ENCODE measurements at regions of chr5 and their contacts with region 1.

Region 1: DNA sequence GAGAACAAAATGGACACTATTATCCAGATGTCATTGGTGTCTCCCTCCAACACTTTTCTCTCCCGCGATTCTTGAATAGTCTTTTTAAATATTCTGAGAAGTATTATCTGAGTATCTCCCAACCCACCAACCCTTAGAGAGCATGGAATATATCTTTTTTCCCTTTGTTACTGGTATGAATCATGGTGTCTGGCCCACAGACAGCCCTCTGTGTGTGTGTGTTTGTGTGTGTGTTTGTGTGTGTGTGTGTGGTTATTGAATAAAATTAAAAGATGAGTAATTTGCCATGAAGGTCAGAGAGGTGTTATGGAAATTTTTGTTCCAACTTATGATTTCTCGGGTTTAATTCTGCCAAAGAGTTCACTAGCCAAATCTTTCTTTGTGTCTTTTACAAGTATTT is 47.7 kb downstream of the CAMK4 start:
- DNase-seq: no peak
- ATAC-seq: no peak
- H3K4me3 ChIP-seq: no peak overlapping the region
- H3K4me3 Mint-ChIP-seq: no peak overlapping the region
- H3K27ac ChIP-seq: no peak overlapping the region
- H3K27ac Mint-ChIP-seq: peak overlapping the region; percentile 58
- H3K4me1 ChIP-seq: peaks cover 12% of the 10 kb centered on the region
- H3K4me1 Mint-ChIP-seq: peaks cover 78% of the 10 kb centered on the region
- H3K27me3 ChIP-seq: no peaks in the 10 kb centered on the region
- H3K27me3 Mint-ChIP-seq: no peaks in the 10 kb centered on the region
- CTCF ChIP-seq: no peak

Region 2: GRCh38 chr5:111254613-111255012 is 17.3 kb before region 1 on chr5:
- CTCF ChIA-PET with region 1: interaction called, 4 read pairs
- POLR2A ChIA-PET with region 1: interaction called, 3 read pairs
- intact Hi-C with region 1: loop called in 1 of 2 experiments (anchors 2 kb)
- DNase-seq: peak in 6 of 9 experiments; percentile 19 to 93 (median 69)
- ATAC-seq: peak; percentile 86
- H3K4me3 ChIP-seq: no peak overlapping the region
- H3K4me3 Mint-ChIP-seq: peak overlapping the region; percentile 60
- H3K27ac ChIP-seq: peak overlapping the region; percentile 14 to 62
- H3K27ac Mint-ChIP-seq: peak overlapping the region; percentile 90
- H3K4me1 ChIP-seq: peaks cover 68% of the 10 kb centered on the region
- H3K4me1 Mint-ChIP-seq: peaks cover 79% of the 10 kb centered on the region
- H3K27me3 ChIP-seq: no peaks in the 10 kb centered on the region
- H3K27me3 Mint-ChIP-seq: no peaks in the 10 kb centered on the region
- CTCF ChIP-seq: no peak

Region 3: DNA sequence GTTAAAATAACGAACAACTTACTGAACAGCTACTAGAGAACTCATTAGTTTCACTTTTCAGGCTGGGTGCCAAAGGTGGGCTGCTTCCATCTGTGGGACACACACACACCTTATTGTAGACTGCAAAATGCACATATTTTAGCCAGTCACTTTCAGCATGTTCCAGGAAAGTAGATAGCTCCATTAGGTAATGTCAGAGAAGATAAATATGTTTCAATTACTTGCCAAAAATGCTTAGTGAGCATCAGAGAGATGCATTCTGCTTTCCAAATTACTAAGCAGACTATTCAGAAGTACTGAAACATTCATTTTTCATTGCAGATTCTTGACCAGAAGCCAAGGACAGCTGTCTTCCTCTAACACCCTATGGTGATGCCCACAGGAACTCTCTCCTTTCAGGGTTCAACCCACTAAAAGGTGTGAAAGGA is 1409.6 kb after region 1 on chr5:
- CTCF ChIA-PET with region 1: no interaction called
- POLR2A ChIA-PET with region 1: no interaction called
- intact Hi-C with region 1: no loop called
- DNase-seq: no peak
- ATAC-seq: no peak
- H3K4me3 ChIP-seq: no peak overlapping the region
- H3K4me3 Mint-ChIP-seq: no peak overlapping the region
- H3K27ac ChIP-seq: no peak overlapping the region
- H3K27ac Mint-ChIP-seq: no peak overlapping the region
- H3K4me1 ChIP-seq: no peaks in the 10 kb centered on the region
- H3K4me1 Mint-ChIP-seq: no peaks in the 10 kb centered on the region
- H3K27me3 ChIP-seq: no peaks in the 10 kb centered on the region
- H3K27me3 Mint-ChIP-seq: peaks cover 27% of the 10 kb centered on the region
- CTCF ChIP-seq: no peak

Measured in CD8-positive, alpha-beta T cell (primary cell).